HEK293 (cell line): ENCODE measurements at regions of chr17 and their contacts with region 1.

Region 1: GRCh38 chr17:65278050-65278819 is 141.1 kb downstream of the RGS9 start:
- H3K4me3 ChIP-seq: no peak overlapping the region
- H3K27ac ChIP-seq: no peak overlapping the region
- H3K4me1 ChIP-seq: no peaks in the 10 kb centered on the region
- CTCF ChIP-seq: peak; percentile 67

Region 2: DNA sequence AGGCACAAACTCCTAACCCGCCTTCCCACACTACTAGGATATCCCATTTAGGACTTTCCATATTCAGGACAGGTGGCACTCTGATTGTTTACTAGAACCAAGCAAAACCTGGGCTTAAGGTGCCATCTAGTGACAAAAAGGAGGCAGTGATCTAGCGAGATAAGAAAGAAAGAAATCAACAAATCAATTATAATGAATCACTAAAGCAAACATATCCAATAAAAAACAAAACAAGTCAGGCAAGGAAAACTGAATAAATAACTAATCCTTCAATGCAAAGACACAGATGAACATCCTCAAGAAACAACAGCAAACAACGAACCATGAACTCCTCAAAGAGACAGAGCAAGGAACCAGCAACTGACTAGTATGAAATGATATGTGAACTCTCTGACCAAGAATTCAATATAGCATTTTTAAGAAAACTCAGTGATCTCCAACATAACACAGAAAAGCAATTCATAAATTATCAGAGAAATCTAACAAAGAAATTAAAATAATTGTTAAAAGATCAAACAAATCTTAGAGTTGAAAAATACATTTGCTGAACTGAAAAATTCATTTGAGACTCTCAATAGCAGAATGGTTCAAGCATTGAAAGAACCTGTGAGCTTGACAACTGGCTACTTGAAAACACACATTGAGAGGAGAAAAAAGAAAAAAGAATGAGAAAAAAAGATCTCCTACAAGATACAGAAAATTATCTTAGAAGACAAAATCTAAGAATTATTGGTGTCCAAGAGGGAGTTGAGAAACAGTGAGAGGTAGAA is 710.0 kb after region 1 on chr17:
- CTCF ChIA-PET with region 1: interaction called, 17 read pairs
- POLR2A ChIA-PET with region 1: no interaction called
- H3K4me3 ChIP-seq: no peak overlapping the region
- H3K27ac ChIP-seq: no peak overlapping the region
- H3K4me1 ChIP-seq: no peaks in the 10 kb centered on the region
- CTCF ChIP-seq: 0 out of 2 replicates have a peak, but pooled peaks have one; percentile 22

Region 3: DNA sequence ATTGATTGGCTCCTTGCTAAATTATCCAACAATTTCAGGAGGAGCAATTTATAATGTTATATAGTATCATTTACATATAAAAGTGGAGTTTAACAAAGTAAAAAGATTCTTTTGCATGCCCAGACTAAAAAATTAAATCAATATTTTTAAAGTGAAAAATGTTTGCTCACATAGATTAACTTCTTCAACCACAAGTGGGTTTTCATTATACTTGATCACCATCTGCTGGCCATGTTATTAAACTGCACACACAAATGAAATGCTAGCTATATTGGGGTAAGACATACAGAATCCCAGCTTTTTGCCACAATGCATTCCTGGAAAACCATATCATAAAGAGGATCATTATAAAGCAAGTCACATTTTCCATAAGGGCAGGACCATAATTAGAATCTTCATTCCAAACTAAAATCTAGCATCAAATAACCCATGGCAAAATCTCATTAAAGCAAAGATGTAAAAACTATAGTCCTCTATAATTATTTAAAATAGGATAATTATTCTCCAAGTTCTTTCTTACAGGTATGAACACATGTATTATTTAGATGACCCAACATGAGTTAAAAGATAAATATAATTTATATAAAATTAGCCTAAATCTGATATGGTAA is 887.4 kb after region 1 on chr17:
- CTCF ChIA-PET with region 1: interaction called, 14 read pairs
- POLR2A ChIA-PET with region 1: no interaction called
- H3K4me3 ChIP-seq: no peak overlapping the region
- H3K27ac ChIP-seq: no peak overlapping the region
- H3K4me1 ChIP-seq: no peaks in the 10 kb centered on the region
- CTCF ChIP-seq: 0 out of 2 replicates have a peak, but pooled peaks have one; percentile 13